ENCODE measurements at regions of chr19 and their contacts with region 1.

Region 1: GRCh38 chr19:3440082-3440481 is 40.2 kb downstream of the SMIM24 start:
- DNase-seq: peak; percentile 75
- ATAC-seq: peak; percentile 37

Region 2: GRCh38 chr19:3466635-3467034 is 26.6 kb after region 1 on chr19:
- intact Hi-C with region 1: loop called (anchors 1 kb)
- DNase-seq: no peak
- ATAC-seq: peak; percentile 28

Measured in Right ventricle myocardium superior (tissue), 1 donor.